ENCODE measurements at regions of chr3 and their contacts with region 1.

Region 1: GRCh38 chr3:11651900-11652299 is 8.2 kb upstream of the VGLL4 start:
- DNase-seq: peak; percentile 63
- ATAC-seq: peak; percentile 70
- H3K4me3 ChIP-seq: no peak overlapping the region
- H3K27ac ChIP-seq: no peak overlapping the region; the same call in 1 of the 2 replicates
- H3K4me1 ChIP-seq: no peaks in the 10 kb centered on the region
- H3K27me3 ChIP-seq: no peaks in the 10 kb centered on the region
- CTCF ChIP-seq: peak; percentile 55
- POLR2A ChIP-seq: no peak
- RAD21 ChIP-seq: peak; percentile 58

Region 2: GRCh38 chr3:10945683-10946287 is 706.1 kb before region 1 on chr3:
- CTCF ChIA-PET with region 1: no interaction called
- POLR2A ChIA-PET with region 1: no interaction called
- dilution Hi-C with region 1: no loop called
- in situ Hi-C with region 1: loop called (anchors 10 kb)
- intact Hi-C with region 1: loop called (anchors 5 kb)
- DNase-seq: peak; percentile 25
- ATAC-seq: peak; percentile 88
- H3K4me3 ChIP-seq: no peak overlapping the region
- H3K27ac ChIP-seq: no peak overlapping the region
- H3K4me1 ChIP-seq: no peaks in the 10 kb centered on the region
- H3K27me3 ChIP-seq: peaks cover 13% of the 10 kb centered on the region
- CTCF ChIP-seq: peak; percentile 66
- POLR2A ChIP-seq: no peak
- RAD21 ChIP-seq: peak; percentile 58

Region 3: GRCh38 chr3:11591391-11592282 is 60.3 kb before region 1 on chr3:
- CTCF ChIA-PET with region 1: no interaction called
- POLR2A ChIA-PET with region 1: no interaction called
- dilution Hi-C with region 1: no loop called
- in situ Hi-C with region 1: no loop called
- intact Hi-C with region 1: no loop called
- DNase-seq: peak; percentile 87
- ATAC-seq: peak; percentile 77
- H3K4me3 ChIP-seq: no peak overlapping the region
- H3K27ac ChIP-seq: peak overlapping the region; percentile 92
- H3K4me1 ChIP-seq: peaks cover 45% of the 10 kb centered on the region
- H3K27me3 ChIP-seq: no peaks in the 10 kb centered on the region
- CTCF ChIP-seq: no peak
- POLR2A ChIP-seq: 0 out of 2 replicates have a peak, but pooled peaks have one; percentile 39
- RAD21 ChIP-seq: no peak

Measured in IMR-90 (cell line).